IMR-90 (cell line): ENCODE measurements at regions of chr2 and their contacts with region 1.

Region 1: GRCh38 chr2:220228299-220229006 is 601.0 kb downstream of the SLC4A3 start:
- DNase-seq: peak; percentile 99
- ATAC-seq: peak; percentile 81
- H3K4me3 ChIP-seq: no peak overlapping the region; the same call in 1 of the 2 replicates
- H3K27ac ChIP-seq: peak overlapping the region; percentile 89
- H3K4me1 ChIP-seq: peaks cover 18% of the 10 kb centered on the region
- H3K27me3 ChIP-seq: no peaks in the 10 kb centered on the region
- CTCF ChIP-seq: no peak
- POLR2A ChIP-seq: no peak
- RAD21 ChIP-seq: 0 out of 2 replicates have a peak, but pooled peaks have one; percentile 10

Region 2: DNA sequence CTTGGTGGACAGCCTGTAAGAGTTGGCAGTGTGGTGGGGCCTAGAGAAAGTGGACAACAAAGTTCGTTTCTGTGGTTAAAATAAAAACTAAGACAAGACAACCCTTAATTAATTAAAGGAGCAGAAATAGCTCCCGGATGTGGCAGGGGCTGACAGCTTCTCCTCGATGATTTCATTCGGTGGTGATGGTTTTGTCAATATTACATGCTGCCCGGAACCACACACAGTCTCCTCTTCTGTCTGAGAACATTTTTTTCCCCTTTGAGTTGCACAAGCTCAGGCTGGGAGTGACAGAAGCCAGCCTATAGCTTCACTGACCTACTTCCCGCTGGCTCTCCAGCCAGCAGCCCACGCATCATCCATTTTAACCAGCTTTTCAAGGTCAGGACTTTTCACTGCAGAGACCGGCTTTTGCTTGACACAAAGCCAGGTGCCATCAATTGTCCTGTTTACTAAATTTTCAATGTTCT is 222.3 kb before region 1 on chr2:
- CTCF ChIA-PET with region 1: no interaction called
- POLR2A ChIA-PET with region 1: no interaction called
- dilution Hi-C with region 1: no loop called
- in situ Hi-C with region 1: no loop called
- intact Hi-C with region 1: loop called (anchors 10 kb)
- DNase-seq: peak; percentile 70
- ATAC-seq: peak; percentile 73
- H3K4me3 ChIP-seq: no peak overlapping the region
- H3K27ac ChIP-seq: no peak overlapping the region
- H3K4me1 ChIP-seq: peaks cover 13% of the 10 kb centered on the region
- H3K27me3 ChIP-seq: no peaks in the 10 kb centered on the region
- CTCF ChIP-seq: no peak
- POLR2A ChIP-seq: no peak
- RAD21 ChIP-seq: no peak

Region 3: GRCh38 chr2:220277445-220278007 is 49.1 kb after region 1 on chr2:
- CTCF ChIA-PET with region 1: no interaction called
- POLR2A ChIA-PET with region 1: no interaction called
- dilution Hi-C with region 1: no loop called
- in situ Hi-C with region 1: no loop called
- intact Hi-C with region 1: loop called (anchors 5 kb)
- DNase-seq: peak; percentile 89
- ATAC-seq: peak; percentile 40
- H3K4me3 ChIP-seq: no peak overlapping the region
- H3K27ac ChIP-seq: peak overlapping the region; percentile 84; the same call in 1 of the 2 replicates
- H3K4me1 ChIP-seq: peaks cover 23% of the 10 kb centered on the region
- H3K27me3 ChIP-seq: no peaks in the 10 kb centered on the region
- CTCF ChIP-seq: no peak
- POLR2A ChIP-seq: no peak
- RAD21 ChIP-seq: no peak

Region 4: GRCh38 chr2:220512419-220512818 is 284.0 kb after region 1 on chr2:
- CTCF ChIA-PET with region 1: no interaction called
- POLR2A ChIA-PET with region 1: no interaction called
- dilution Hi-C with region 1: no loop called
- in situ Hi-C with region 1: no loop called
- intact Hi-C with region 1: loop called (anchors 5 kb)
- DNase-seq: peak; percentile 79
- ATAC-seq: peak; percentile 60
- H3K4me3 ChIP-seq: no peak overlapping the region
- H3K27ac ChIP-seq: peak overlapping the region; percentile 100
- H3K4me1 ChIP-seq: peaks cover 19% of the 10 kb centered on the region
- H3K27me3 ChIP-seq: no peaks in the 10 kb centered on the region
- CTCF ChIP-seq: no peak
- POLR2A ChIP-seq: no peak
- RAD21 ChIP-seq: no peak

Region 5: GRCh38 chr2:220586980-220587530 is 358.6 kb after region 1 on chr2:
- CTCF ChIA-PET with region 1: no interaction called
- POLR2A ChIA-PET with region 1: no interaction called
- dilution Hi-C with region 1: no loop called
- in situ Hi-C with region 1: no loop called
- intact Hi-C with region 1: loop called (anchors 5 kb)
- DNase-seq: peak; percentile 79
- ATAC-seq: peak; percentile 92
- H3K4me3 ChIP-seq: no peak overlapping the region
- H3K27ac ChIP-seq: peak overlapping the region; percentile 86; the same call in 1 of the 2 replicates
- H3K4me1 ChIP-seq: peaks cover 8% of the 10 kb centered on the region
- H3K27me3 ChIP-seq: no peaks in the 10 kb centered on the region
- CTCF ChIP-seq: no peak
- POLR2A ChIP-seq: no peak
- RAD21 ChIP-seq: no peak

Region 6: DNA sequence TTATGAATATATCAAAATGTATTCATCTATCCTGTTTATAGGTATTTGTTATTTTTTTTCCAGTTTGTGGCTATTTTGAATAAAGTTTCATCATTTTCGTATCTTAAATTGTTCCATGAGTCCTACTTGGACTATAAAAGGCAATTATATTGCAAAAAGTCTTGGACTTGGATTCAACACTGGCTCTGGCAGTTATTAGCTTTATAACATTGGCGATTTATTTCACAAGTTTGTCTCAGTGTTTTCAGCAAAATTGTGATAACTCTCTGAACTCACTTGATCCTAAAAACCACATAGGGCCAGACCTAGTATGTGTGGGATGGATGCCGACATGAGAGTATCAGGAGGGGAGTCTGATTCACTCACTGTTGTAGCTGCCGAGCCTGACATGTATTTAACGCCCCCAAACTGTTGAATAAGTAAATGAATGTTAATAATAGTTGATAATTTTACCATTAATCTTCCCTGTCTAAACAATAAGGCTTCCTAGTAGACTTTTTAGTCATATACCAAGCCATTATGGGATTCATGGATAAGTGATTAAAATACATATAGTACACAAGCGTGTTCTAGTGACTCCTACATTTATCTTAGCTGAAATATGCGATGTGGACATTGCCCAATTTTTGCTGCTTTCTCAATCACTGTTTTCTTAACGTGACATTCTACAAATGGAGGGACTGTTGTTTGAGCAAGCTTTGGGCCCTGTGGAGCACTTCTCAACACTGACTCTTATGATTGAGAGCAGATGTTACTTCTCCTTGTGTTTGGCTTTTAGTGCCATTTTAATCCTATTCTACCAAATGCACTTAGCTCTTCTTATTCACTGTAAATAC is 436.0 kb after region 1 on chr2:
- CTCF ChIA-PET with region 1: no interaction called
- POLR2A ChIA-PET with region 1: no interaction called
- dilution Hi-C with region 1: no loop called
- in situ Hi-C with region 1: no loop called
- intact Hi-C with region 1: loop called (anchors 10 kb)
- DNase-seq: peak; percentile 66
- ATAC-seq: peak; percentile 77
- H3K4me3 ChIP-seq: no peak overlapping the region
- H3K27ac ChIP-seq: peak overlapping the region; percentile 24; the same call in 1 of the 2 replicates
- H3K4me1 ChIP-seq: peaks cover 3% of the 10 kb centered on the region
- H3K27me3 ChIP-seq: no peaks in the 10 kb centered on the region
- CTCF ChIP-seq: no peak
- POLR2A ChIP-seq: no peak
- RAD21 ChIP-seq: no peak

Region 7: DNA sequence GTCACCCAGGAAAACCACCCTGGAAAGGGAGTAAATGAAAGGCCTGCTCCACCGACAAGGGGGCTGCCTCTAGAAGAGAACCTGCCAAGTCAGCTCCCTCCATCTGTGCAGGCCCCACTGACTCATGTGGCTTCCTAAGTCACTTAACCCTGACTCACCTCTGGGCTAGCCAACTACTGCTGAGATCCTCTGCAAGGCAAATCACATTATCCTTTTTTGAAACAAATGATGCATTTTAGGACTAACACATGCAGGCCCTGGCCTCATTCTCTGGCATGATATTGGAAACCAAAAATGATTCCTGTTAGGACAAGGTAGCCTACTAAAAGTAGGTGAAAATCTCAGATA is 869.1 kb after region 1 on chr2:
- CTCF ChIA-PET with region 1: no interaction called
- POLR2A ChIA-PET with region 1: no interaction called
- dilution Hi-C with region 1: no loop called
- in situ Hi-C with region 1: no loop called
- intact Hi-C with region 1: loop called (anchors 5 kb)
- DNase-seq: peak; percentile 92
- ATAC-seq: peak; percentile 91
- H3K4me3 ChIP-seq: no peak overlapping the region
- H3K27ac ChIP-seq: no peak overlapping the region
- H3K4me1 ChIP-seq: peaks cover 6% of the 10 kb centered on the region
- H3K27me3 ChIP-seq: no peaks in the 10 kb centered on the region
- CTCF ChIP-seq: no peak
- POLR2A ChIP-seq: no peak
- RAD21 ChIP-seq: no peak